A673 (cell line): ENCODE measurements at regions of chr7 and their contacts with region 1.

Region 1: GRCh38 chr7:23981320-23981719 is 271.3 kb downstream of the STK31 start:
- DNase-seq: no peak
- H3K4me3 ChIP-seq: no peak overlapping the region
- H3K27ac ChIP-seq: no peak overlapping the region
- H3K4me1 ChIP-seq: no peaks in the 10 kb centered on the region
- H3K27me3 ChIP-seq: no peaks in the 10 kb centered on the region
- CTCF ChIP-seq: no peak

Region 2: GRCh38 chr7:23959821-23960220 is 21.5 kb before region 1 on chr7:
- CTCF ChIA-PET with region 1: no interaction called
- POLR2A ChIA-PET with region 1: interaction called, 11 read pairs
- intact Hi-C with region 1: no loop called
- DNase-seq: no peak
- H3K4me3 ChIP-seq: no peak overlapping the region
- H3K27ac ChIP-seq: no peak overlapping the region
- H3K4me1 ChIP-seq: no peaks in the 10 kb centered on the region
- H3K27me3 ChIP-seq: no peaks in the 10 kb centered on the region
- CTCF ChIP-seq: no peak

Region 3: DNA sequence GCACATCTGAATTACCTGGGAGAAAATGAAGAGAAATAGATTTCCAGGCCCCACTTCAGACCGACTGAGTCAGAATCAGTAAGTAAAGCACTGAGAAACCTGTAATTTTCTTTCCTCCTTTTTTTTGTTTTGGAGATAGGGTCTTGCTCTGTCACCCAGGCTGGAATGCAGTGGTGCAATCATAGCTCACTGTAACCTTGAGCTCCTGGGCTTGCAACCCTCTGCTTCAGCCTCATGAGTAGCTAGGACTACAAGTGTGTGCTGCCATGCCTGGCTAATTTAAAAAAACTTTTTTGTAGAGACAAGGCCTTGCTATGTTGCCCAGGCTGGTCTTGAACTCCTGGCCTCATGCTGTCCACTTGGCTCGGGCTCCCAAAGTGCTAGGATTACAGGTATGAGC is 11.1 kb before region 1 on chr7:
- CTCF ChIA-PET with region 1: no interaction called
- POLR2A ChIA-PET with region 1: no interaction called
- intact Hi-C with region 1: no loop called
- DNase-seq: no peak
- H3K4me3 ChIP-seq: no peak overlapping the region
- H3K27ac ChIP-seq: no peak overlapping the region
- H3K4me1 ChIP-seq: no peaks in the 10 kb centered on the region
- H3K27me3 ChIP-seq: no peaks in the 10 kb centered on the region
- CTCF ChIP-seq: no peak